ENCODE measurements at regions of chr17 and their contacts with region 1.

Region 1: DNA sequence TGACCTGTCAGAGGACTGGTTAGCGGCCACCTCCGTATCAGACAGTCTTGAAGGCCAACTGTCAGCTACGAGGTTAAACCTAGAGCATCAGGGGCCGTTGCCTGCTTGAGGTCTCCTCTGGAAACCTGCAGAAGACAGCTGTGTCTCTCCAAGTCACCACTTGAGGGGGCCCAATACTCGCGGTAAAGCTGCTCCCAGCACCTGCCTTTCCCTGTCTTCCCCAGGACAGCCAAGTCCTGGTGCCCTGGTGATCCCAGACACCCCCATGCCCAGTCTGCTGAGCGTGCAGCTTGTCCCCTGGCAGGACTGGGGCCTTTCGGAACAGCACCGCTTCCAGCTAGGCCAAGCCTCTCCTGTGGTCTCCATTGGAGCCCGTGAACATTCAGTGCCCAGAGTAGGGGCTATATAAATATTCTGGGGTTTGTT is 80.1 kb downstream of the DNAH17 start:
- ATAC-seq: peak; percentile 75 to 98 (median 93)
- H3K4me3 ChIP-seq: no peak overlapping the region
- H3K27ac ChIP-seq: no peak overlapping the region
- H3K4me1 ChIP-seq: peaks cover 0 to 3% of the 10 kb centered on the region in 2 donors

Region 2: DNA sequence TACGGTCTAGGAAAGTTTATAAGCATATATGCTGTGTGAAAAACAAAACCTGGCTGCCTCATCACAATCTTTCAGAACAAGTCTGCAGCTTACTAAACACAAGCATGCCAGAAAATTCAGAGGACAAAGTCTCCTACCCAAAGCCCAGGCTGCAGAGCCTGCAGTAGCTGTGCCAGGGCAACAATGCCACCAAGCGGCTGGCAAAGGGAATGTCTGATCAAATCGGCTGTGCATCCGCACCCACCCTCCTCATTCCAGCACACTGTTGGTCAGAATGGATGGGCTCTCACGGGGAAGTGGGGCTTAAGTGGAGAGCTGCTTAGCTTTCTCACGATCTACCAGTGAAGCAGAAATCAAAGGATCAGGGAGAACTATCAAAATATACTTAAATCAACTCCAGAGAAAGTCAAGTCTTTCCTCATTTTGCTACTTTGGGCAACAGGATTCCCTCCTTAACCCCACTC is 211.4 kb after region 1 on chr17:
- in situ Hi-C with region 1: loop called in 4 of 9 experiments (anchors 10 to 25 kb)
- ATAC-seq: peak; percentile 67 to 100 (median 89)
- H3K4me3 ChIP-seq: no peak overlapping the region
- H3K27ac ChIP-seq: no peak overlapping the region
- H3K4me1 ChIP-seq: peaks cover 0 to 3% of the 10 kb centered on the region in 2 donors

Region 3: GRCh38 chr17:78745407-78746088 is 248.4 kb after region 1 on chr17:
- in situ Hi-C with region 1: no loop called
- ATAC-seq: no peak
- H3K4me3 ChIP-seq: no peak overlapping the region
- H3K27ac ChIP-seq: no peak overlapping the region
- H3K4me1 ChIP-seq: no peaks in the 10 kb centered on the region

Measured in motor neuron (in vitro differentiated cells).